ENCODE measurements at regions of chr19 and their contacts with region 1.

Region 1: GRCh38 chr19:41255171-41255570 is 9.0 kb upstream of the HNRNPUL1 start:
- H3K4me3 ChIP-seq: no peak overlapping the region
- H3K27ac ChIP-seq: no peak overlapping the region
- H3K4me1 ChIP-seq: no peaks in the 10 kb centered on the region
- CTCF ChIP-seq: no peak

Region 2: GRCh38 chr19:41218615-41219507 is 36.3 kb before region 1 on chr19 and contains the start of gene AXL:
- CTCF ChIA-PET with region 1: interaction called, 5 read pairs
- POLR2A ChIA-PET with region 1: interaction called, 11 read pairs
- H3K4me3 ChIP-seq: no peak within 1 kb of the TSS
- H3K27ac ChIP-seq: no peak within 1 kb of the TSS
- H3K4me1 ChIP-seq: no peaks in the 10 kb centered on the region; the same call in 1 of the 2 replicates
- CTCF ChIP-seq: no peak

Measured in HEK293 (cell line).